ENCODE measurements at regions of chr1 and their contacts with region 1.

Region 1: DNA sequence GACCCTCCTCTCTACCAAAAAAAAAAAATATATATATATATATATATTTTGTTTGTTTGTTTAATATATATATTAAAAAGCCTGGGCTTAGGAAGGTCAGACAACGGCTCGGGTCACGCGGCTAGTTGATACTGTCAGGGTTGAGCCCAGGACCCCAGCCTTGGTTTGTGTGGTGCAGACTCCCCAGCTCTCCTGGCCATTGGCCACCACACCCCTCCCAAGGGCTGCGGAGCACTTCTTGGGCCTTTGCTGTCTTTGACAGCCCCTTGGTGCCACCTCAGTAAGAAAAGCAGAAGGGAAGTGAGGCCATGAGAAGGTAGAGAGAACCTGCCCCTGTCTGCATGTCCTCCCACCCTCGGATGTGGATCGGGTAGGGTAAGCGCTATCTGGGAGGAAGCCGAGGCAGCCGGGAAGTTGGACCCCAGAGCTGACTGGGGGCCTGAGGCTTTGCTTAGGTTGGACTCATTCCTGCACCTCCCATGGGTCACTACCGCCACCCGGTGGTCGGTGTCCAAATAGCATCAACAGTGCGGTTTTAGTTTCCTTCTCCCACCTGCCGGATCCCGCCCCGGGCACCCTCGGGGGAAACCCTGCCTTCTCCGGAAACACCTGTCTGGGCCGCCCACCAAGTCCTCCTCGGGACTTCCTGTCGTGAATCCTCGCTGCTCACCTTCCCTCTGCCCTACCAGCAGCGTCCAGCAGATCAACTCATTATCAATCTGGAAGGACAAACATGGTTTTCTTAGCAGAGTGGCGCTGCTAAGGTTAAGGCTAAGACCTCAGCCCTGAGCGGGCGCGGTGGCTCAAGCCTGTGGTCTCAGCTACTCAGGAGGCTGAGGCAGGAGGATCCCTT is 29.8 kb upstream of the GNPAT start:
- DNase-seq: peak; percentile 53
- ATAC-seq: peak; percentile 97
- H3K4me3 ChIP-seq: peak overlapping the region; percentile 55
- H3K27ac ChIP-seq: no peak overlapping the region
- H3K4me1 ChIP-seq: no peaks in the 10 kb centered on the region
- H3K27me3 ChIP-seq: peaks cover 20% of the 10 kb centered on the region
- CTCF ChIP-seq: peak; percentile 90
- POLR2A ChIP-seq: no peak
- RAD21 ChIP-seq: peak; percentile 93

Region 2: GRCh38 chr1:230669543-230669942 is 541.7 kb before region 1 on chr1:
- CTCF ChIA-PET with region 1: no interaction called
- POLR2A ChIA-PET with region 1: interaction called, 26 read pairs
- dilution Hi-C with region 1: no loop called
- in situ Hi-C with region 1: no loop called
- intact Hi-C with region 1: no loop called
- DNase-seq: no peak
- ATAC-seq: no peak
- H3K4me3 ChIP-seq: no peak overlapping the region
- H3K27ac ChIP-seq: no peak overlapping the region
- H3K4me1 ChIP-seq: no peaks in the 10 kb centered on the region
- H3K27me3 ChIP-seq: no peaks in the 10 kb centered on the region
- CTCF ChIP-seq: no peak
- POLR2A ChIP-seq: no peak
- RAD21 ChIP-seq: no peak

Region 3: DNA sequence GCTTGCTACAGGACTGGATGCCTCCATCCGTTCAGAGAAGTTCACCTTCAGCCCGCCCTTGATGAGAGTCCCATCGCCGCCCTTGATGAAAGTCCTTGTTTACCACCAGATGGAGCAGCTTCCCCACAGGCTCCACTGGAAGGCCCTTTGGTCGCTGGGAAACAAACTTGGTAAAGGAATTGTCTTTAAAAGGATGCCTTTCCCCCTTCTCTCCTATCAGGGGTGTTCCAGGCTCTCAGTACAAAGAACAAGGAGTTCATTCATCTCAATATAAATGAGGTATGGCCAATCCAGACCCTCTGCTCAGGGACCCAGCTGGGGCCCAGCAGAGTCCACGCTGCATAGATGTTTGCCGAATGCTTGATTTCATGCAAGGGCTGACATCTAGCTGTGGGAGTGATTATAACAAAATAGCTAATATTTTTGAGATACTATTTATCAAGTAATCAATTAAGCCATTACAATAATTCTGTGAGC is 413.3 kb before region 1 on chr1:
- CTCF ChIA-PET with region 1: interaction called, 5 read pairs
- POLR2A ChIA-PET with region 1: no interaction called
- dilution Hi-C with region 1: no loop called
- in situ Hi-C with region 1: loop called (anchors 5 kb)
- intact Hi-C with region 1: loop called (anchors 1 kb)
- DNase-seq: peak; percentile 73
- ATAC-seq: peak; percentile 93
- H3K4me3 ChIP-seq: no peak overlapping the region
- H3K27ac ChIP-seq: no peak overlapping the region
- H3K4me1 ChIP-seq: no peaks in the 10 kb centered on the region
- H3K27me3 ChIP-seq: no peaks in the 10 kb centered on the region
- CTCF ChIP-seq: peak; percentile 89
- POLR2A ChIP-seq: no peak
- RAD21 ChIP-seq: peak; percentile 97

Region 4: GRCh38 chr1:230917284-230918135 is 293.7 kb before region 1 on chr1:
- CTCF ChIA-PET with region 1: interaction called, 4 read pairs
- POLR2A ChIA-PET with region 1: no interaction called
- dilution Hi-C with region 1: no loop called
- in situ Hi-C with region 1: loop called (anchors 5 kb)
- intact Hi-C with region 1: loop called (anchors 1 kb)
- DNase-seq: peak; percentile 67
- ATAC-seq: peak; percentile 91
- H3K4me3 ChIP-seq: no peak overlapping the region
- H3K27ac ChIP-seq: no peak overlapping the region
- H3K4me1 ChIP-seq: peaks cover 6% of the 10 kb centered on the region; the same call in 1 of the 2 replicates
- H3K27me3 ChIP-seq: no peaks in the 10 kb centered on the region
- CTCF ChIP-seq: peak; percentile 89
- POLR2A ChIP-seq: 0 out of 2 replicates have a peak, but pooled peaks have one; percentile 31
- RAD21 ChIP-seq: peak; percentile 94

Region 5: GRCh38 chr1:230978491-230979388 is 232.5 kb before region 1 on chr1 and contains the starts of genes ARV1 and TTC13:
- CTCF ChIA-PET with region 1: no interaction called
- POLR2A ChIA-PET with region 1: no interaction called
- dilution Hi-C with region 1: no loop called
- in situ Hi-C with region 1: no loop called
- intact Hi-C with region 1: loop called (anchors 2 kb)
- DNase-seq: peak; percentile 98
- ATAC-seq: peak; percentile 99
- H3K4me3 ChIP-seq: peak within 1 kb of the TSS; percentile 68
- H3K27ac ChIP-seq: peak within 1 kb of the TSS; percentile 71
- H3K4me1 ChIP-seq: peaks cover 6% of the 10 kb centered on the region
- H3K27me3 ChIP-seq: no peaks in the 10 kb centered on the region
- CTCF ChIP-seq: peak; percentile 13; the same call in 1 of the 2 replicates
- POLR2A ChIP-seq: 0 out of 2 replicates have a peak, but pooled peaks have one; percentile 26
- RAD21 ChIP-seq: peak; percentile 25
- total RNA-seq, gene ARV1: 19.0 and 26.7 TPM in 2 replicates
- total RNA-seq, gene TTC13: 8.9 and 9.1 TPM in 2 replicates

Region 6: GRCh38 chr1:231016234-231016633 is 195.0 kb before region 1 on chr1:
- CTCF ChIA-PET with region 1: no interaction called
- POLR2A ChIA-PET with region 1: no interaction called
- dilution Hi-C with region 1: no loop called
- in situ Hi-C with region 1: no loop called
- intact Hi-C with region 1: no loop called
- DNase-seq: no peak
- ATAC-seq: peak; percentile 28; the same call in 1 of the 2 replicates
- H3K4me3 ChIP-seq: no peak overlapping the region
- H3K27ac ChIP-seq: no peak overlapping the region
- H3K4me1 ChIP-seq: peaks cover 7% of the 10 kb centered on the region
- H3K27me3 ChIP-seq: no peaks in the 10 kb centered on the region
- CTCF ChIP-seq: no peak
- POLR2A ChIP-seq: no peak
- RAD21 ChIP-seq: no peak

Region 7: DNA sequence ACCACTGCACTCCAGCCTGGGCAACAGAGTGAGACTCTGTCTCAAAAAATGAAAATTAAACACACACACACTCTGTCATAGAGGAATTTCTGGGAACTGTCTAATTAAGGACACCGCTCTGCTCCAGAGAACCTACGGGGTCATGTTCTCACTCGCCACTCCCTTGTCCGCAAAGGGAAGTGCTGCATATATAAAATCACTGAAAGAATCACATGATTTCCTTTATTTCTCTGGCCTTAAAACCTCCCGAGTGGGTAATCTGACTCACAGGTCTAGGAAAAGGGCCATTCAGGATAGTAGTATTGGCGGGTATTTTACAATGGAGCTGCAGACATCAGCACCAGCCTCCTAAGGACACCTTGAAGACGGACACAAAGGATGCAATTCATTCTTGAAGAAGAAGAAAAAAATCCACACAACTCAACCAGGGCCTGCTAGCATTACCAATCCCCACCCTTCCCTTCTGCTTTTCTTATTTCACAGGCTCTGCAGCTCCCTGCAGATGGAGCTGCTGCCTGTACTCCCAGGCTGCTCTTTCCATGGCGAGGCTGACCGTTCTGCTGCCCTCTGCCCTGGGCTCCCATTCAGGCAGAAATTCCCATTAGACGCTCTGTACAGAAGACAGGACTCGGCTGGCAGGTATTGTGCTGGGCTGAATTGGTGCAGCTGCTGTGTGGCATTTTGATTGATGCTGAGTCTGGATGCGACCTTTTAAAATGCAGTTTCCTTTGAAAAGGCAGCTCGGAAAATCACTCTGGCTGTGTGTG is 117.9 kb before region 1 on chr1:
- CTCF ChIA-PET with region 1: no interaction called
- POLR2A ChIA-PET with region 1: no interaction called
- dilution Hi-C with region 1: no loop called
- in situ Hi-C with region 1: no loop called
- intact Hi-C with region 1: loop called (anchors 1 kb)
- DNase-seq: no peak
- ATAC-seq: no peak
- H3K4me3 ChIP-seq: no peak overlapping the region
- H3K27ac ChIP-seq: no peak overlapping the region
- H3K4me1 ChIP-seq: no peaks in the 10 kb centered on the region
- H3K27me3 ChIP-seq: peaks cover 17% of the 10 kb centered on the region
- CTCF ChIP-seq: no peak
- POLR2A ChIP-seq: no peak
- RAD21 ChIP-seq: no peak

Region 8: DNA sequence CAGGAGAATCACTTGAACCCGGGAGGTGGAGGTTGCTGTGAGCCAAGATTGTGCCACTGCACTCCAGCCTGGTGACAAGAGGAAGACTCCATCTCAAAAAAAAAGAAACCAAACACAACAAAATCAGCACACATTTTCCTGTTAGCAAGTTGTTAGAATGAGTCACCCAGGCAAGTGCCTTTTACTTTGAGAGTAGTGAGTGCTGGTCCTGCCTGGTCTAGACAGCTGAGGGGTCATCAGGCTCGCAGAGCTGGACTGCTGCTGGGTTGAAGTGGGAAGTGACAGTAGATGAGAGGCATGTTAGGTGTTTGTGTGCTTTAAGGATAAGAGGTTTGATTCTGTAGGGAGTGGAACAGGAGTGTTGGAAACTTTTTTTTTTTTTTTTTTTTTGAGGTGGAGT is 61.6 kb after region 1 on chr1:
- CTCF ChIA-PET with region 1: no interaction called
- POLR2A ChIA-PET with region 1: no interaction called
- dilution Hi-C with region 1: no loop called
- in situ Hi-C with region 1: no loop called
- intact Hi-C with region 1: no loop called
- DNase-seq: peak; percentile 53
- ATAC-seq: peak; percentile 69
- H3K4me3 ChIP-seq: no peak overlapping the region
- H3K27ac ChIP-seq: no peak overlapping the region
- H3K4me1 ChIP-seq: no peaks in the 10 kb centered on the region; the same call in 1 of the 2 replicates
- H3K27me3 ChIP-seq: no peaks in the 10 kb centered on the region
- CTCF ChIP-seq: no peak
- POLR2A ChIP-seq: no peak
- RAD21 ChIP-seq: no peak